Activated CD4-positive, alpha-beta T cell treated with anti-CD3 and anti-CD28 coated beads, Interleukin-2, amount 10 ng/mL, durations not matched to agents 7 days and 5 days (primary cell): ENCODE measurements at regions of chr2 and their contacts with region 1.

Region 1: GRCh38 chr2:178414266-178415247 is 36.4 kb downstream of the PRKRA start:
- DNase-seq: peak; percentile 86
- H3K4me3 Mint-ChIP-seq: peak overlapping the region; percentile 95
- H3K27ac Mint-ChIP-seq: peak overlapping the region; percentile 99
- H3K4me1 Mint-ChIP-seq: peaks cover 45% of the 10 kb centered on the region
- H3K27me3 Mint-ChIP-seq: no peaks in the 10 kb centered on the region

Region 2: DNA sequence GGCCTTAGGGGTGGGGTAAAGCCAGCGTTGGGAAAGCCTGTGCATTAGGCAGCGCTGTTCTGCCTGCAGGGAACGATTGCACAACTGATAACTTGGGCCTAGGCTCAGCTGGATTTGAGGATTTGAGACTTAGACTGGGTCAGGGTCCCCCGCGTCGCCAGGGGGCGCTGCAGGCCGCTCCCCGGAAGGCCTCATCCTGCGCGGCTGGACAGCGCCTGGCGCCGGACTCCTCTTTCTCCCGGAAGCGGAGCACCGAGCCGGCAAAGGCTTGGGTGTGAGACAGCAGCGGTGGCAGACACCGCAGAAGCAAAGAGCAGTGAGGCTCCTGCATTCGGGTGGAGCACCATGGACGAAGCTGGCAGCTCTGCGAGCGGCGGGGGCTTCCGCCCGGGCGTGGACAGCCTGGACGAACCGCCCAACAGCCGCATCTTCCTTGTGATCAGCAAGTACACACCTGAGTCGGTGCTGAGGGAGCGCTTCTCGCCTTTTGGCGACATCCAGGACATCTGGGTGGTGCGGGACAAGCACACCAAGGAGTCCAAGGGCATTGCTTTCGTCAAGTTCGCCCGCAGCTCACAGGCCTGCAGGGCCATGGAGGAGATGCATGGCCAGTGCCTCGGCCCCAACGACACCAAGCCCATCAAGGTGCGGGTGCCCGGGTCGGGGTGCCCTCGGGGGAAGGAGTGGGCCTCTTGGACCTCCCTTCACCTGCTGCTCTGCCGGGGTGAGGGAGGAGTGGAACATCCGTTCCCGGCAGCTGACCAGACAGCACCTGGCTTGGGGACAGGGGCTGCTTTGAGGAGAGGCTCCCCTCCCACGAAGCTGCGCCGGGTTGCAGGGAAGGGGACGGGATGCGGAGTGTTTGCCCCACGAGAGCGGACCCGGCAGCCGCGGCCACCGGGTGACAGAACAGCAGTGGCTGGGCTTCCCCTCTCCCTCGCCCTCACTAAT is 302.1 kb before region 1 on chr2 and contains the start of gene RBM45:
- CTCF ChIA-PET with region 1: interaction called, 13 read pairs
- POLR2A ChIA-PET with region 1: no interaction called
- DNase-seq: peak; percentile 85
- H3K4me3 Mint-ChIP-seq: peak within 1 kb of the TSS; percentile 90
- H3K27ac Mint-ChIP-seq: peak within 1 kb of the TSS; percentile 90
- H3K4me1 Mint-ChIP-seq: peaks cover 38% of the 10 kb centered on the region
- H3K27me3 Mint-ChIP-seq: no peaks in the 10 kb centered on the region
- total RNA-seq, gene RBM45: 19.0 to 22.0 TPM

Region 3: GRCh38 chr2:178152033-178152432 is 262.5 kb before region 1 on chr2:
- CTCF ChIA-PET with region 1: no interaction called
- POLR2A ChIA-PET with region 1: no interaction called
- DNase-seq: no peak
- H3K4me3 Mint-ChIP-seq: no peak overlapping the region
- H3K27ac Mint-ChIP-seq: no peak overlapping the region
- H3K4me1 Mint-ChIP-seq: no peaks in the 10 kb centered on the region
- H3K27me3 Mint-ChIP-seq: peaks cover 13% of the 10 kb centered on the region

Region 4: DNA sequence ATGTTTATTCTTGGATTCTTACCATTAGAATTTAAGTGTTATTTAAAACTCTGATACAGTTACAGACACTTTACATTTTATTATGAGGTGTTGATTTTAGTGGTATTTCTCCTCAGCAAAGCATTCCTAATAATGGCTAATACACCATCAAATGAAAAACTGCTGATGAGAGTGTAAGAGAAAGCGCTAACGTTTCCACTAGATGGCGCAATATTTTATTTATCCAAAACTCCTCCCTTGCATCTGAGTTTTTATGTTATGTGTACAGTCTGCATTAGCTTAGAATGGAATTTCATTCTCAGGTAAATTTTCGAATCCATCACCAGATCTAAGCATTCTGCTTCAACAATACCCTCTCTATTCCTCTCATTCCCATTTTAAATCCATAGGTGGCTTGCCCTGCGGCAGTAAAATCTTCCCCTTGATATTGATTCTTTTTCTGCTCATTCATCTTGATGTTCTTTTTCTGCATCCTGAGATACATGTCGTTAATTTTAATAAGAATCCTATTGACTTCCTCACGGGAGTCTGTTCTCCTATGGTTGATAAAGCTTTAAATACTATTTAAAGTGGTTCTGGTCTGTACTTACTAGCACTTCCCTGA is 17.5 kb before region 1 on chr2:
- CTCF ChIA-PET with region 1: interaction called, 52 read pairs
- POLR2A ChIA-PET with region 1: no interaction called
- DNase-seq: peak; percentile 15
- H3K4me3 Mint-ChIP-seq: no peak overlapping the region
- H3K27ac Mint-ChIP-seq: no peak overlapping the region
- H3K4me1 Mint-ChIP-seq: peaks cover 7% of the 10 kb centered on the region
- H3K27me3 Mint-ChIP-seq: peaks cover 25% of the 10 kb centered on the region

Region 5: DNA sequence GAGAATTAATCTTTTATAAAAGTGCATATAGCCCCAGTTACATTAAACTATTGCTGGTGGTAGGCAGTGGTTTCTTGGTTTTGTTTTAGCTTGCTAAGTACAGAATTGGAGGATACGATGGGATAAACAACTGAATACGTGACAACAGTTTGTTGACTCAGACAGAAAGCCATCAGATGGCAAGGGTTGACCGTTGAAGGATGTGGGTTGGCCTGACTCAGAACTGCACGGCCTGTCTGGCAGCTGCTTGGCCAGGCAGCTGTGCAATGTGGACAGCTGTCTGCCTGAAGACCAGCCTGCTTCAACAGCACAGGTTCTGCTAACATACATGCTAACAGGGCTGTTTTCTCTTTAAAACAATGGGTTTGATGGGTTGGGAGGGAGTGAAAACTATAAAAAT is 10.2 kb before region 1 on chr2:
- CTCF ChIA-PET with region 1: interaction called, 52 read pairs
- POLR2A ChIA-PET with region 1: interaction called, 14 read pairs
- DNase-seq: peak; percentile 41
- H3K4me3 Mint-ChIP-seq: peak overlapping the region; percentile 4
- H3K27ac Mint-ChIP-seq: peak overlapping the region; percentile 87
- H3K4me1 Mint-ChIP-seq: peaks cover 25% of the 10 kb centered on the region
- H3K27me3 Mint-ChIP-seq: peaks cover 8% of the 10 kb centered on the region

Region 6: DNA sequence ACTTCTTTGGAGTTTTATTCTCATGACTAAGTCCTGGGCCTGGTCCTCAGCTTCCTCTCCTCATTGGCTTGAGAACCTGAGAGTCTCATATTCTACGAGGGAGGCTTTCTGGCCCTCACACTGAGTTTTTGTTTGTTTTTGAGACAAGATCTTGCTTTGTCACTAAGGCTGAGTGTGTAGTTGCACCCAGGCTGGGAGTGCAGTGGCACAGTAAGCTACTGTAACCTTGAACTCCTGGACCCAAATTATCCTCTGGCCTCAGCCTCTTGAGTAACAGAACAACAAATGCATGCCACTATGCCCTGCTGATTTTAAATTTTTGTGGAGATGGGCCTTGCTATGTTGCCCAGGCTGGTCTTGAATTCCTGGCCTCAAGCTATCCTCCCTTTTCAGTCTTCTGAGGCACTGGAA is 13.8 kb after region 1 on chr2:
- CTCF ChIA-PET with region 1: interaction called, 26 read pairs
- POLR2A ChIA-PET with region 1: no interaction called
- DNase-seq: no peak
- H3K4me3 Mint-ChIP-seq: no peak overlapping the region
- H3K27ac Mint-ChIP-seq: no peak overlapping the region
- H3K4me1 Mint-ChIP-seq: peaks cover 3% of the 10 kb centered on the region
- H3K27me3 Mint-ChIP-seq: no peaks in the 10 kb centered on the region

Region 7: GRCh38 chr2:178450774-178451525 is 36.4 kb after region 1 on chr2 and contains the starts of genes PJVK and PRKRA:
- CTCF ChIA-PET with region 1: interaction called, 11 read pairs
- POLR2A ChIA-PET with region 1: interaction called, 5 read pairs
- DNase-seq: peak; percentile 96
- H3K4me3 Mint-ChIP-seq: peak within 1 kb of the TSS; percentile 86
- H3K27ac Mint-ChIP-seq: peak within 1 kb of the TSS; percentile 94
- H3K4me1 Mint-ChIP-seq: peaks cover 33% of the 10 kb centered on the region
- H3K27me3 Mint-ChIP-seq: peaks cover 2% of the 10 kb centered on the region
- total RNA-seq, gene PJVK: 1.5 to 2.2 TPM
- total RNA-seq, gene PRKRA: 37.4 to 38.2 TPM